Activated CD8-positive, alpha-beta memory T cell treated with anti-CD3 and anti-CD28 coated beads, Interleukin-2, amount 10 ng/mL, durations not matched to agents 7 days and 5 days (primary cell): ENCODE measurements at regions of chr19 and their contacts with region 1.

Region 1: DNA sequence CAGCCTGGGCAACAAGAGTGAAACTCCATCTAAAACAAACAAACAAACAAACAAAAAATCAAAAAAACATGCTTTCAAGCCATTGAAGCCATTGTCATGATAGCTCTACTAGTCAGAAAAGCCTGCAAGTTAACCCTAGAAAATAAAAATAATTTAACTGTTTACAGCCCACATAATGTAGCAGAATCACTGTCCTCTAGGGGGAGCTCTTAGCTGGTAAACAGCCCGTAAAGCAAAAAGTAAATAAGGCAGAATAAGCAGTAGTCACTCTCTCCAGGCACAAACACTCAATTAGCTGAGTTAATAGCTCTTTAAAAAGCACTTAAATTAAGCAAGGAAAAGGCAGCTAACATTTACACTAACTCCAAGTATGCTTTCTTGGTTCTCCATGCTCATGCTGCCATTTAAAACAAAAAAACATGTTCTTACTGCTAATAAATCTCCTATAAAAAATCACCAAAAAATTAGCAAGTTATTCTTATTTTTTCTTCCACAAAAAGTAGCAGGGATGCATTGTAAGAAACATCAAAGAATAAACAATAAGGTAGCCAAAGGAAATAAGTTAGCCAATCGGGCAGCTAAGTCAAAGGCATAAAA is 11.3 kb downstream of the LILRB4 start:
- DNase-seq: no peak
- ATAC-seq: no peak
- H3K4me3 Mint-ChIP-seq: no peak overlapping the region
- H3K27ac Mint-ChIP-seq: no peak overlapping the region
- H3K4me1 Mint-ChIP-seq: peaks cover 2% of the 10 kb centered on the region
- H3K27me3 Mint-ChIP-seq: peaks cover 14% of the 10 kb centered on the region

Region 2: DNA sequence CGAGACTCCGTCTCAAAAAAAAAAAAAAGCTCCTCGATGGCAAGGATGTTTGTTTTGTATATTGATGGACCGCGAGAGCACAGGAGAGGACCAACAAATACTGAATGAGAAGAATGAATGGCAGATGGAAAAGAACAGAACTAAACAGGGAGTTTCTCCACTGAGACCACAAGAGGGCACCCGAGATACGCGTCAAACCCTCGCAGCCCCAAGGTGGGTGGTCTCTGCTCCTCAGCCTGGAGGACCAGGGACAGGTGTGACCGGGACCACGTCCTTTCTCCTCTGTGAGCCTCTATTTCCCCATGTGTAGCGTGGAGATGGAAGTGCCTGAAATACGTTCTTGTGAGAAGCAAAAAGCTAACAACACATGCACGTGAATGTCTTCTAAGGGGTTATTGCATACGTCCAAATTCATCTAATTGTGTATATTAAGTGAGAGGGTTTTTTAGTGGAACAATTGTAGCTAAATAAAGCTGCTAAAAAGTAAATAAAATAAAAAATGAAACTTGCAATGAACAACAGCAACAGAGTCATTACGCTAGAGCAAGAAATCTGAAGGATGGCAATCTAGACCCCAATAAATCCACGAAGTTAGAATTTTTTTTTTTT is 192.7 kb before region 1 on chr19:
- CTCF ChIA-PET with region 1: interaction called, 76 read pairs
- DNase-seq: no peak
- ATAC-seq: peak; percentile 70
- H3K4me3 Mint-ChIP-seq: no peak overlapping the region
- H3K27ac Mint-ChIP-seq: no peak overlapping the region
- H3K4me1 Mint-ChIP-seq: peaks cover 36% of the 10 kb centered on the region
- H3K27me3 Mint-ChIP-seq: peaks cover 51% of the 10 kb centered on the region

Region 3: GRCh38 chr19:54616821-54617560 is 57.1 kb before region 1 on chr19:
- CTCF ChIA-PET with region 1: no interaction called
- DNase-seq: no peak
- ATAC-seq: no peak
- H3K4me3 Mint-ChIP-seq: peak overlapping the region; percentile 32
- H3K27ac Mint-ChIP-seq: no peak overlapping the region
- H3K4me1 Mint-ChIP-seq: peaks cover 10% of the 10 kb centered on the region
- H3K27me3 Mint-ChIP-seq: peaks cover 20% of the 10 kb centered on the region

Region 4: GRCh38 chr19:54653181-54653809 is 20.8 kb before region 1 on chr19:
- CTCF ChIA-PET with region 1: interaction called, 12 read pairs
- DNase-seq: no peak
- ATAC-seq: no peak
- H3K4me3 Mint-ChIP-seq: no peak overlapping the region
- H3K27ac Mint-ChIP-seq: no peak overlapping the region
- H3K4me1 Mint-ChIP-seq: no peaks in the 10 kb centered on the region
- H3K27me3 Mint-ChIP-seq: peaks cover 2% of the 10 kb centered on the region